ENCODE measurements at regions of chr19 and their contacts with region 1.

Region 1: GRCh38 chr19:38891771-38892170 is 7.6 kb downstream of the SIRT2 start:
- DNase-seq: no peak
- H3K4me3 Mint-ChIP-seq: no peak overlapping the region
- H3K27ac Mint-ChIP-seq: no peak overlapping the region
- H3K4me1 Mint-ChIP-seq: no peaks in the 10 kb centered on the region
- H3K27me3 Mint-ChIP-seq: no peaks in the 10 kb centered on the region

Region 2: GRCh38 chr19:38831142-38831605 is 60.6 kb before region 1 on chr19:
- CTCF ChIA-PET with region 1: no interaction called
- DNase-seq: peak; percentile 49
- H3K4me3 Mint-ChIP-seq: peak overlapping the region; percentile 81
- H3K27ac Mint-ChIP-seq: peak overlapping the region; percentile 94
- H3K4me1 Mint-ChIP-seq: peaks cover 32% of the 10 kb centered on the region
- H3K27me3 Mint-ChIP-seq: no peaks in the 10 kb centered on the region

Region 3: GRCh38 chr19:38877781-38878574 is 13.8 kb before region 1 on chr19 and contains the start of gene RINL:
- CTCF ChIA-PET with region 1: interaction called, 34 read pairs
- DNase-seq: peak; percentile 86
- H3K4me3 Mint-ChIP-seq: peak within 1 kb of the TSS; percentile 92
- H3K27ac Mint-ChIP-seq: peak within 1 kb of the TSS; percentile 98
- H3K4me1 Mint-ChIP-seq: peaks cover 50% of the 10 kb centered on the region
- H3K27me3 Mint-ChIP-seq: no peaks in the 10 kb centered on the region